GM10248 (cell line): ENCODE measurements at regions of chr13 and their contacts with region 1.

Region 1: GRCh38 chr13:25232937-25233515 is 54.3 kb downstream of the MTMR6 start:
- DNase-seq: peak; percentile 54
- CTCF ChIP-seq: peak; percentile 57

Region 2: DNA sequence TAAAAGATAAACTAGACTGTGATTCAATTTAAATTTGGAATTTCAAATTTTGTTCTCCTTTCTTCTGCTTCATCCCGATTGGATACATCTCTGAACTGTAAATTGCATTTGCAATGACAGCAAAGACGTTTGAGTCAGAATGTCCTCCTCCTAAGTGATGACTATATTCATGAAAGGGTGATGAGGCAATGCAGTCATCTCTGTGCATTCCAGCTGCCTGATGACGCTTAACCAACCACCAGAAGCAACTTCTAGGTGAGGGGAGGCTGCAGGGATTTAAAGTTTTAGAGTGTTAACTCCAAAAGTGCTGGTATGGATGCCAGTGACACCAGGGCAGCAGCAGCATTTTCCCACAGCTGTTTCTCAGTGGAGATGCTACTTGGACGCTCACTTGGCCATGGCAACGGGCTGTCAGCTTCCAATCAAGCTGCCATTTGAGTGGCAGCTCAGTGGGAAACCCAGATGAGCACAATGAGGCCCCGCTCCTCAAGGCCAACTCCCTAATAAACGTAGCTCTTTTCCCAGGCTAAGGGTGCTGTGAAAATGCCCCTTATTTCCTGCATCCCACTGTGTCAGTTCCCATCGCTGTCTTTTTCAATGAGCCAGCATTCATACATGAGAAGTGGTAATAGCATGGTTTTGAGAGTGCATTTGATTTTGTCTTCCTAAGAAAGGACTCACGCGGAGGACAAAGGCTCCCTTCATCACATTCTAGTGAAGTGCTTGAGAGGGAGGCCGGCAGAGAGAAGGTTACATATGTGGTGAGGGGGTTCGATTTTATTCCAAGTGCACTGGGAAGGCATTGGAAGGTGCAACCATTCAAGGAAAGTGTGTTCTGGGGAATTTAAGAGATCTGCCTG is 15.8 kb before region 1 on chr13:
- CTCF ChIA-PET with region 1: interaction called, 11 read pairs
- POLR2A ChIA-PET with region 1: no interaction called
- DNase-seq: no peak
- CTCF ChIP-seq: no peak

Region 3: DNA sequence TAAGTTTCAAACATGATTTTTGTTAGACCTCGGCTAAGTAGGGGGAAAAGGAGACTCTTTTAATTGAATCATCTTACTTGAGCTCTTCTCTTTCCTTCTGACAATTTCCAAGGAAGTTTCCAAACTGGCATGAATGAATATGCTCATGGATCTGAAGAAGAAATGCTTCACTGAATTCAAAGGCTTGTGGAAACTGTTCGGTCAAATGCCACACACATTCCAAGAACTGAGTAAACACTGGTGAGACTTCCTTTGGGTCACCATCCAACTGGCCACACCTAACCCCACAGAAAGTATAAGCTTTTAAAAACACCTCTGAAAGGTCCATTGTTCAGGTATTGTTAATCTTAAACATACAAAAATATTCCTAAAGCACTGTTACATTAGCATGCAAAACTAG is 20.7 kb after region 1 on chr13:
- CTCF ChIA-PET with region 1: interaction called, 11 read pairs
- POLR2A ChIA-PET with region 1: no interaction called
- DNase-seq: no peak
- CTCF ChIP-seq: no peak